ENCODE measurements at regions of chr19 and their contacts with region 1.

Region 1: GRCh38 chr19:19170053-19170872 is at the start of gene MEF2B:
- DNase-seq: no peak
- H3K4me3 ChIP-seq: peak within 1 kb of the TSS; percentile 23
- CTCF ChIP-seq: no peak

Region 2: GRCh38 chr19:19053508-19054314 is 116.6 kb before region 1 on chr19:
- CTCF ChIA-PET with region 1: interaction called, 31 read pairs
- POLR2A ChIA-PET with region 1: no interaction called
- DNase-seq: no peak
- H3K4me3 ChIP-seq: no peak overlapping the region
- CTCF ChIP-seq: peak; percentile 71

Region 3: GRCh38 chr19:19185853-19186740 is 15.8 kb after region 1 on chr19:
- CTCF ChIA-PET with region 1: interaction called, 51 read pairs
- POLR2A ChIA-PET with region 1: interaction called, 5 read pairs
- DNase-seq: no peak
- H3K4me3 ChIP-seq: no peak overlapping the region
- CTCF ChIP-seq: peak; percentile 67

Region 4: GRCh38 chr19:19211499-19212432 is 41.5 kb after region 1 on chr19 and contains the start of gene NCAN:
- CTCF ChIA-PET with region 1: no interaction called
- POLR2A ChIA-PET with region 1: no interaction called
- DNase-seq: no peak
- H3K4me3 ChIP-seq: no peak within 1 kb of the TSS
- CTCF ChIP-seq: no peak

Measured in AG04449 (cell line).